ENCODE measurements at regions of chr11 and their contacts with region 1.

Region 1: DNA sequence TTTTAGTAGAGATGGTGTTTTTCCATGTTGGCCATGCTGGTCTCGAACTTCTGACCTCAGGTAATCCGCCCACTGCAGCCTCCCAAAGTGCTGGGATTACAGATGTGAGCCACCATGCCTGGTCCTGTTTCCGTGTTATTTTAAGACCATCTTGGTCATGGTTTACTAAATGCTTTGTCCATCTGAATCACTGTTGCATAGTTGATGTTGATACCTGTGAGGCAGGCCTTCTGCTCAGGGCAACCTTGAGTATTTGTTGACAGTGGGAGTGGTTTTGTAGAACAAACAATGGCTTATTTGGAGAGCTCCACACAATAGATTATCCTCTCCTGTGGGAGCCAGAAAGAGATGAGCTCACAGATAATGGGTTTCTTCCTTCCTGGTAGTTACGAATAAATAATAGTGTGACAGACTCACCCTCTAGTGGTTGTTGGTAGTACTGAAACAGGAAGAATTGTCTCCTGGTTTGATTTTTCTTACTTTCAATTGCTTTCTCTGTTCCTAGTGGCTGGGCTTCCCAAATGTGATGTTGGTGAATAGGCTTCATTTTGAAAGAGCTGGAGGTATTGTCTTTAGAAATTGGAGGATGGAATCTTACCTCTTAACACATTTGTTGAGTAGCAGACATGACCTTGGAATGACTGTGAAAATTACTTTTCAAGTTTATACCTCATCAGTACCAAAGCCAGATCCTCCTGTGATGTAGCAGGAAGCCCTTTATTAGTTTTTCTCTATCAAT is 39.0 kb downstream of the CTNND1 start:
- DNase-seq: peak in 7 of 9 donors; percentile 46 to 70 (median 64)
- ATAC-seq: peak; percentile 93
- H3K4me3 ChIP-seq: no peak overlapping the region
- H3K4me3 Mint-ChIP-seq: peak overlapping the region in 6 of 10 donors; percentile 33 to 57 (median 54)
- H3K27ac ChIP-seq: peak overlapping the region; percentile 39
- H3K27ac Mint-ChIP-seq: peak overlapping the region; percentile 42 to 92 (median 80)
- H3K4me1 ChIP-seq: peaks cover 8 to 10% of the 10 kb centered on the region in 2 donors
- H3K4me1 Mint-ChIP-seq: peaks cover 22 to 40% (median 30%) of the 10 kb centered on the region in 7 donors
- H3K27me3 ChIP-seq: no peaks in the 10 kb centered on the region
- H3K27me3 Mint-ChIP-seq: no peaks in the 10 kb centered on the region

Region 2: DNA sequence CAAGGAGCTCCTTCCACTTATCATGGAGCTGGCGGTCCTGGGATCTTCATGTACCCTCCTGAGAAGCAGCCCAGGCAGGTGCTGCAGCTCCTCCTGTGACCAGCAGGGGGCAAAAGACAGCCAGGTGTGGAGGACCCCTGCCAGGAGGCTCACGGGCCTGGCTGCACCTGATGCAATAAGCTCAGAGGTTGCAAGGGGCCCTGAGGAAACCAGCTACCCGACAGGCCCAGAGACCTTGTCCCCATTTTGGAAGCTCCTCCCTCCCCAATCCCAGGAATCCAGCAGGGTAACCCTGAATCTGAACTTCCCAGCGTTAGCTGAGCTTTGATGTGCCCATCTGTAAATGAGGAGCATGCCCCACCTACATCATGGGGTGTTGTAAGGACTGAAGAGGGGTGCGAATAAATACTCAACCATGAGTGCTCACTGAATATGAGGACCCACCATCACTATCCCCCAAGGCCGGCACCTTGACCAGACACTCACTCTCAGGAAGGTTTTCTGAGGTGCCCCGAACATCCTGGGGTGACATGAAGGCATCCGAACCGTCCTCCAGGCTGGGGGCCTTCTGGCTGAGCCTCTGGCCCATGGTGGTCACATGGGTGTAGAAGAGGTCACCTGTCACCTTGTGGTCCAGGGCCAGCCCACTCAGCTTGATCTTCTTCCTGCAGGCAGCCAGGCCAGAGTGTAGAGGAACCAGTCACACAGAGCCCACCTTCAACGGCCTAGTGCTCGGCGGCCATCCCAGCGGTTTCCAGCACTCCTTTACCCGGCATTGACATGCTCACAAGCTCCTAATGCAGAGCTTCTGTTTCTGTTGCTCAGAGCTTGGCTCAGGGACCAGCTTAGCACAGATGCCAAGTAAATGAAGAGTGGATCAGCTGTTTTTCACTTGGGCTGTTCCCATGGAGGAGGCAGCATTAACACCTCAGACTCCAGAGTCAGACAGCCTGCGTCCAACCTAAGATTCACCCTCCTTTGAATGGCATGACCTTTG is 306.8 kb before region 1 on chr11:
- CTCF ChIA-PET with region 1: interaction called, 8 read pairs
- POLR2A ChIA-PET with region 1: no interaction called
- intact Hi-C with region 1: loop called (anchors 1 to 10 kb)
- DNase-seq: peak; percentile 51 to 77 (median 67)
- ATAC-seq: peak; percentile 89
- H3K4me3 ChIP-seq: no peak overlapping the region
- H3K4me3 Mint-ChIP-seq: no peak overlapping the region
- H3K27ac ChIP-seq: no peak overlapping the region
- H3K27ac Mint-ChIP-seq: peak overlapping the region in 1 of 9 donors; percentile 5
- H3K4me1 ChIP-seq: peaks cover 0 to 3% of the 10 kb centered on the region in 2 donors
- H3K4me1 Mint-ChIP-seq: peaks cover 0 to 11% (median 0%) of the 10 kb centered on the region in 7 donors
- H3K27me3 ChIP-seq: no peaks in the 10 kb centered on the region
- H3K27me3 Mint-ChIP-seq: peaks cover 0 to 3% (median 0%) of the 10 kb centered on the region in 5 donors

Region 3: GRCh38 chr11:57703341-57703740 is 97.3 kb before region 1 on chr11:
- CTCF ChIA-PET with region 1: interaction called, 10 read pairs
- POLR2A ChIA-PET with region 1: interaction called, 3 read pairs
- intact Hi-C with region 1: no loop called
- DNase-seq: no peak
- ATAC-seq: no peak
- H3K4me3 ChIP-seq: no peak overlapping the region
- H3K4me3 Mint-ChIP-seq: no peak overlapping the region
- H3K27ac ChIP-seq: no peak overlapping the region
- H3K27ac Mint-ChIP-seq: peak overlapping the region in 1 of 9 donors; percentile 48
- H3K4me1 ChIP-seq: no peaks in the 10 kb centered on the region
- H3K4me1 Mint-ChIP-seq: peaks cover 0 to 7% (median 4%) of the 10 kb centered on the region in 7 donors
- H3K27me3 ChIP-seq: no peaks in the 10 kb centered on the region
- H3K27me3 Mint-ChIP-seq: no peaks in the 10 kb centered on the region

Region 4: GRCh38 chr11:57751676-57752253 is 48.8 kb before region 1 on chr11 and contains the start of gene BTBD18:
- CTCF ChIA-PET with region 1: interaction called, 30 read pairs
- POLR2A ChIA-PET with region 1: interaction called, 6 read pairs
- intact Hi-C with region 1: loop called (anchors 1 kb)
- DNase-seq: peak in 3 of 9 donors; percentile 9 to 17 (median 14)
- ATAC-seq: peak; percentile 59
- H3K4me3 ChIP-seq: no peak within 1 kb of the TSS
- H3K4me3 Mint-ChIP-seq: no peak within 1 kb of the TSS
- H3K27ac ChIP-seq: no peak within 1 kb of the TSS
- H3K27ac Mint-ChIP-seq: peak within 1 kb of the TSS in 8 of 9 donors; percentile 48 to 86 (median 67)
- H3K4me1 ChIP-seq: peaks cover 0 to 3% of the 10 kb centered on the region in 2 donors
- H3K4me1 Mint-ChIP-seq: peaks cover 2 to 27% (median 24%) of the 10 kb centered on the region in 7 donors
- H3K27me3 ChIP-seq: no peaks in the 10 kb centered on the region
- H3K27me3 Mint-ChIP-seq: no peaks in the 10 kb centered on the region
- total RNA-seq, gene BTBD18: not detected

Region 5: DNA sequence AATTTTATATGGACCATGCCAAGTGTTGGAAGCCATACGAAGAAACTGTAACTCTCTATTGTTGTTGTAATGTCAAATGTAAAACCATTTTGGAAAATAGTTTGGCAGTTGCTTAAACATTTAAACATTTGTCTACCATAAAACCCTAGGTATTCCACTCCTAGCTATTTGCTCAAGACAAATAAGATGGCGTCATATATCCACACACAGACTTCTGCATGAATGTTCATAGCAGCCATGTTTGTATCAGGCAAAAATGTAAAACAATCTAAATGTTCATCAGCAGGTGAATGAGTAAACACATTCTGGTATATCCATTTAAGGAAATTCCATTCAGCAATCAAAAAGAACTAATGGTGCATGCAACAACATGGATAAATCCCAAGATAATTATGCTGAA is 296.8 kb after region 1 on chr11:
- CTCF ChIA-PET with region 1: no interaction called
- POLR2A ChIA-PET with region 1: no interaction called
- intact Hi-C with region 1: no loop called
- DNase-seq: no peak
- ATAC-seq: no peak
- H3K4me3 ChIP-seq: no peak overlapping the region
- H3K4me3 Mint-ChIP-seq: no peak overlapping the region
- H3K27ac ChIP-seq: no peak overlapping the region
- H3K27ac Mint-ChIP-seq: no peak overlapping the region
- H3K4me1 ChIP-seq: no peaks in the 10 kb centered on the region
- H3K4me1 Mint-ChIP-seq: no peaks in the 10 kb centered on the region
- H3K27me3 ChIP-seq: no peaks in the 10 kb centered on the region
- H3K27me3 Mint-ChIP-seq: peaks cover 0 to 12% (median 4%) of the 10 kb centered on the region in 5 donors

Region 6: GRCh38 chr11:58121096-58121495 is 320.5 kb after region 1 on chr11:
- CTCF ChIA-PET with region 1: no interaction called
- POLR2A ChIA-PET with region 1: no interaction called
- intact Hi-C with region 1: no loop called
- DNase-seq: no peak
- ATAC-seq: no peak
- H3K4me3 ChIP-seq: no peak overlapping the region
- H3K4me3 Mint-ChIP-seq: no peak overlapping the region
- H3K27ac ChIP-seq: no peak overlapping the region
- H3K27ac Mint-ChIP-seq: no peak overlapping the region
- H3K4me1 ChIP-seq: no peaks in the 10 kb centered on the region
- H3K4me1 Mint-ChIP-seq: no peaks in the 10 kb centered on the region
- H3K27me3 ChIP-seq: no peaks in the 10 kb centered on the region
- H3K27me3 Mint-ChIP-seq: peaks cover 0 to 48% (median 21%) of the 10 kb centered on the region in 5 donors

Region 7: GRCh38 chr11:58524232-58525036 is 723.8 kb after region 1 on chr11:
- CTCF ChIA-PET with region 1: interaction called, 5 read pairs
- POLR2A ChIA-PET with region 1: no interaction called
- intact Hi-C with region 1: loop called (anchors 1 to 2 kb)
- DNase-seq: peak in 8 of 9 donors; percentile 39 to 78 (median 70)
- ATAC-seq: peak; percentile 78
- H3K4me3 ChIP-seq: peak overlapping the region; percentile 10
- H3K4me3 Mint-ChIP-seq: peak overlapping the region; percentile 65 to 85 (median 80)
- H3K27ac ChIP-seq: peak overlapping the region; percentile 75
- H3K27ac Mint-ChIP-seq: peak overlapping the region; percentile 84 to 99 (median 97)
- H3K4me1 ChIP-seq: peaks cover 18 to 50% of the 10 kb centered on the region in 2 donors
- H3K4me1 Mint-ChIP-seq: peaks cover 27 to 90% (median 54%) of the 10 kb centered on the region in 7 donors
- H3K27me3 ChIP-seq: no peaks in the 10 kb centered on the region
- H3K27me3 Mint-ChIP-seq: no peaks in the 10 kb centered on the region